Calu3 (cell line): ENCODE measurements at regions of chrX and their contacts with region 1.

Region 1: GRCh38 chrX:133670383-133670782 is 255.1 kb upstream of the GPC4 start:
- DNase-seq: peak; percentile 20
- H3K4me3 Mint-ChIP-seq: no peak overlapping the region
- H3K27ac Mint-ChIP-seq: no peak overlapping the region
- H3K4me1 Mint-ChIP-seq: peaks cover 23% of the 10 kb centered on the region
- H3K27me3 Mint-ChIP-seq: no peaks in the 10 kb centered on the region
- CTCF ChIP-seq: peak; percentile 30

Region 2: GRCh38 chrX:132968296-132968949 is 702.0 kb before region 1 on chrX:
- CTCF ChIA-PET with region 1: no interaction called
- intact Hi-C with region 1: loop called (anchors 10 kb)
- DNase-seq: no peak
- H3K4me3 Mint-ChIP-seq: no peak overlapping the region
- H3K27ac Mint-ChIP-seq: no peak overlapping the region
- H3K4me1 Mint-ChIP-seq: no peaks in the 10 kb centered on the region
- H3K27me3 Mint-ChIP-seq: no peaks in the 10 kb centered on the region
- CTCF ChIP-seq: no peak

Region 3: GRCh38 chrX:133045986-133046385 is 624.4 kb before region 1 on chrX:
- CTCF ChIA-PET with region 1: no interaction called
- intact Hi-C with region 1: loop called (anchors 5 kb)
- DNase-seq: peak; percentile 27
- H3K4me3 Mint-ChIP-seq: no peak overlapping the region
- H3K27ac Mint-ChIP-seq: no peak overlapping the region
- H3K4me1 Mint-ChIP-seq: no peaks in the 10 kb centered on the region
- H3K27me3 Mint-ChIP-seq: no peaks in the 10 kb centered on the region
- CTCF ChIP-seq: peak; percentile 30

Region 4: GRCh38 chrX:133171962-133172708 is 498.2 kb before region 1 on chrX:
- CTCF ChIA-PET with region 1: no interaction called
- intact Hi-C with region 1: loop called (anchors 5 kb)
- DNase-seq: peak; percentile 40
- H3K4me3 Mint-ChIP-seq: no peak overlapping the region
- H3K27ac Mint-ChIP-seq: no peak overlapping the region
- H3K4me1 Mint-ChIP-seq: peaks cover 8% of the 10 kb centered on the region
- H3K27me3 Mint-ChIP-seq: no peaks in the 10 kb centered on the region
- CTCF ChIP-seq: peak; percentile 45

Region 5: DNA sequence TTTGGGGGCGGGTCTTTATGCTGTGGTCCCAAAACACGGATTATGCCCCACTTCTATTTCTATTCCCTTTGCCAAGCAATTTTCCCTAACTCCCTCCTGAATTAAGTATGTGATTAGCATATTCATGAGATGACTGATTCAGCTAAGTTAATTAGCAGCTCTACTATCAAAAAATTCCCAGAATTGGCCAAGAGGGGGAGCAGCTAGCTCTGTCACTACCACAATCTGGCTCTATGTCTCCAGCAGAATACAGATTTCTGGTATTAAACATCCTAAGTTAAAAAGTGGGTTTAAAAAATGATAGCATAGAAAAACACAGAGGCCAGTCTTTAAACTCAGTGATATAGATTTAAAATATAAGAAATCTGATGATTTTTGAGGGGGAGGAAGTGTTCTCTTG is 335.4 kb before region 1 on chrX:
- CTCF ChIA-PET with region 1: interaction called, 16 read pairs
- intact Hi-C with region 1: loop called (anchors 1 kb)
- DNase-seq: peak; percentile 41
- H3K4me3 Mint-ChIP-seq: no peak overlapping the region
- H3K27ac Mint-ChIP-seq: no peak overlapping the region
- H3K4me1 Mint-ChIP-seq: peaks cover 8% of the 10 kb centered on the region
- H3K27me3 Mint-ChIP-seq: no peaks in the 10 kb centered on the region
- CTCF ChIP-seq: peak; percentile 38

Region 6: GRCh38 chrX:133415276-133416105 is 254.9 kb before region 1 on chrX and contains the start of gene GPC4:
- CTCF ChIA-PET with region 1: interaction called, 4 read pairs
- intact Hi-C with region 1: loop called (anchors 5 kb)
- DNase-seq: peak; percentile 82
- H3K4me3 Mint-ChIP-seq: peak within 1 kb of the TSS; percentile 99
- H3K27ac Mint-ChIP-seq: peak within 1 kb of the TSS; percentile 75
- H3K4me1 Mint-ChIP-seq: no peaks in the 10 kb centered on the region
- H3K27me3 Mint-ChIP-seq: no peaks in the 10 kb centered on the region
- CTCF ChIP-seq: no peak
- total RNA-seq, gene GPC4: 21.8 and 26.2 TPM in 2 replicates

Region 7: GRCh38 chrX:133468046-133468445 is 202.3 kb before region 1 on chrX:
- CTCF ChIA-PET with region 1: interaction called, 13 read pairs
- intact Hi-C with region 1: loop called (anchors 1 kb)
- DNase-seq: peak; percentile 54
- H3K4me3 Mint-ChIP-seq: no peak overlapping the region
- H3K27ac Mint-ChIP-seq: peak overlapping the region; percentile 23
- H3K4me1 Mint-ChIP-seq: peaks cover 15% of the 10 kb centered on the region
- H3K27me3 Mint-ChIP-seq: no peaks in the 10 kb centered on the region
- CTCF ChIP-seq: no peak

Region 8: GRCh38 chrX:133792198-133792953 is 122.0 kb after region 1 on chrX:
- CTCF ChIA-PET with region 1: no interaction called
- intact Hi-C with region 1: no loop called
- DNase-seq: peak; percentile 78
- H3K4me3 Mint-ChIP-seq: peak overlapping the region; percentile 58
- H3K27ac Mint-ChIP-seq: no peak overlapping the region
- H3K4me1 Mint-ChIP-seq: no peaks in the 10 kb centered on the region
- H3K27me3 Mint-ChIP-seq: no peaks in the 10 kb centered on the region
- CTCF ChIP-seq: peak; percentile 98

Region 9: GRCh38 chrX:133994576-133994975 is 324.2 kb after region 1 on chrX:
- CTCF ChIA-PET with region 1: no interaction called
- intact Hi-C with region 1: no loop called
- DNase-seq: no peak
- H3K4me3 Mint-ChIP-seq: no peak overlapping the region
- H3K27ac Mint-ChIP-seq: no peak overlapping the region
- H3K4me1 Mint-ChIP-seq: no peaks in the 10 kb centered on the region
- H3K27me3 Mint-ChIP-seq: no peaks in the 10 kb centered on the region
- CTCF ChIP-seq: no peak

Region 10: DNA sequence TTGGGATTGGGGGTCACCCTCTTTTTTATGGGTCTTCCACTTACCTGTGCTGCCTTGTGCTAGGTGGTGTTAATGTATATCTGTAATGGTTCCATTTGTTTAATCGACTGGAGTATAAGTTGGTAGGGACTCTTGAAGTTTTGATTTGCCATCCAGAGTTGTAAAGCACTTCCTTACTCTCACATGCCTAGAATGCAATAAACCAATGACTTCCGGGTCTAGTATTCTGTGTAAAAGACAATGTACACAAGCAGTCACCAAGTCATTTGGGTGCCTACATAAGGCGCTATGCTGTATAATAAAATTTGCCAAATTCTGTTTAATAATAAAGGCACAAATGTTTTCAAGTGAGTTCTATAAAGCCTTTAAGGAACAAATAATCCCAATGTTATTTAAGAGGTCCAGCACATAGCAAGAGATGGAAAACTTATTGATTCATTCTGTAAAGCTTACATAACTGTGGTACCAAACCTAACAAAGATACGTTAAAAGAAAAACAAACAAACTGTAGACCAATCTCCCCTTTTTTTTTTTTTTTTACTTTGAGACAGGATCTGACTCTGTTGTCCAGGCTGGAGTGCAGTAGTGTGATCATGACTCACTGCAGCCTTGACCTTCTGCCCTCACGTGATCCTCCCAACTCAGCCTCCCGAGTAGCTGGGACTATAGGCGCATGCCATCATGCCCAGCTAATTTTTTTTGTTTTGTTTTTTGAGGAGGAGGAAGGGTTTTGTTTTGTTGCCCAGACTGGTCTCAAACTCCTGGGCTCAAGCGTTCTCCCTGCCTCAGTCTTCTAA is 748.1 kb after region 1 on chrX:
- CTCF ChIA-PET with region 1: no interaction called
- intact Hi-C with region 1: no loop called
- DNase-seq: no peak
- H3K4me3 Mint-ChIP-seq: no peak overlapping the region
- H3K27ac Mint-ChIP-seq: no peak overlapping the region
- H3K4me1 Mint-ChIP-seq: no peaks in the 10 kb centered on the region
- H3K27me3 Mint-ChIP-seq: no peaks in the 10 kb centered on the region
- CTCF ChIP-seq: no peak